IMR-90 (cell line): ENCODE measurements at regions of chr17 and their contacts with region 1.

Region 1: DNA sequence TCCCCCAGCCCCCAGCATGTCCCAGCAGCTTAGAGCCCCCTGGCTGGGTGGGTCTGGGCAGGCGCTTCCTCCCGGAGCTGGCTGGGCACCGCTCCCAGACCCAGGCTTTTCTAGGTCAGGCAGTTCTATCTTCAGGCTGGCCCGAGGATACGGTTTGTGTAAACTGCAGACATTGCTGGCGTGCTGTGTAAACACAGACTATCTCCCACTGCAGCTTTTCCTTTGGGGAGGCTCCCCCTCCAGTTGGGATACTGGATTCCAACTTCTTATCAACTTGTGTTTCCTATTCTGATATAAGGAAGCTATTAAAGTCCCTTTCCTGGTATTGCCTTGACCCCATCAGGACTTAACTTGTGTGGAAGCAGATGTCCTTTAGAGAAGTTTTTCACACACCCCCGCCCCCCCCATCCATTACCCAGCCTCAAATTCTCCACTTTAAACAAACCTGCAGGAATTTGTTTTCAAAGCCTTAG is 18.3 kb upstream of the GNA13 start:
- DNase-seq: peak; percentile 68
- ATAC-seq: peak; percentile 91
- H3K4me3 ChIP-seq: no peak overlapping the region
- H3K27ac ChIP-seq: peak overlapping the region; percentile 48; the same call in 1 of the 2 replicates
- H3K4me1 ChIP-seq: peaks cover 14% of the 10 kb centered on the region
- H3K27me3 ChIP-seq: no peaks in the 10 kb centered on the region
- CTCF ChIP-seq: no peak
- POLR2A ChIP-seq: no peak
- RAD21 ChIP-seq: peak; percentile 18; the same call in 1 of the 2 replicates

Region 2: DNA sequence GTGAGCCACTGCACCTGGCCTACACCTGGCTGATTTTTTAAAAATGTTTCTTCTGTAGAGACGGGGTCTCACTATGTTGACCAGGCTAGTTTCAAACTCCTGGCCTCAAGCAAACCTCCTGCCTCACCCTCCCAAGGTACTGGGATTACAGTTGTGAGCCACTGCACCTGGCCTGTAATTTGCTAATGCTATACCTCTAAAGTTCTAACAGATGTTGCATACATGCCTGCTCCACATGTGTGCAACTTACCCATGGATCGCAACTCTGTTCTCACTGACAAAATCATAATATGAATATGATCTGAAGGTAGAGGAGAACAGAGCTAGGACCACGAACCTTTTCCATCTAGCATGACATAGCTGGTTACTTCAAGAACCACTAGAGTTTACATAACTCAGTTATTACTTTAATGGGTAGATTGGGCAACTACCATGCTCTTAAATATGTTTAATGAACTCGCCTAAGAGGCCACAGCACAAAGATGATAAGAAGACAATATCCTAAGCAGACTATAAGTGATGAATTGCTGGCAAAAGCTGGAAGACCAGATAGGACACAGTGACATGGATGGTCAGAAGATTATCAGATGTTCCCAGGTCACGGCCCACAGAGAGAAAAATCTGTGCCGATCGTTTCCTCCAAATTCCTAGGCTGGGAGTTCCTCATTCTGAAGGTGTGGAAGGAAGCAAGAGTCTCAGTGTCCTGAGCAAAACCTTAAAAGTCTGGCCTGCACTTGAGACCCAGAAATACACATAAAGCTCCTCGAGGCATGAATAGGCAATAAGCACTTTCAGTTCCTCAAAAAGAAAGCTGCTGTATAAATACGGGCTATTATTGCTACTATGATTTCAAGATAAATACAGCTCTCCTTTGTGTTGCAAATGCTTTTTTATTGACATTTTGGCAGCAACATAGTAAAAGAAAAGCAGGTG is 1000.8 kb before region 1 on chr17:
- CTCF ChIA-PET with region 1: no interaction called
- POLR2A ChIA-PET with region 1: no interaction called
- dilution Hi-C with region 1: no loop called
- in situ Hi-C with region 1: no loop called
- intact Hi-C with region 1: no loop called
- DNase-seq: no peak
- ATAC-seq: no peak; the same call in 1 of the 2 replicates
- H3K4me3 ChIP-seq: no peak overlapping the region
- H3K27ac ChIP-seq: no peak overlapping the region
- H3K4me1 ChIP-seq: peaks cover 11% of the 10 kb centered on the region
- H3K27me3 ChIP-seq: no peaks in the 10 kb centered on the region
- CTCF ChIP-seq: no peak
- POLR2A ChIP-seq: no peak
- RAD21 ChIP-seq: no peak

Region 3: GRCh38 chr17:64682261-64683181 is 392.3 kb before region 1 on chr17:
- CTCF ChIA-PET with region 1: no interaction called
- POLR2A ChIA-PET with region 1: no interaction called
- dilution Hi-C with region 1: no loop called
- in situ Hi-C with region 1: no loop called
- intact Hi-C with region 1: no loop called
- DNase-seq: peak; percentile 95
- ATAC-seq: peak; percentile 40
- H3K4me3 ChIP-seq: peak overlapping the region; percentile 26; the same call in 1 of the 2 replicates
- H3K27ac ChIP-seq: peak overlapping the region; percentile 99
- H3K4me1 ChIP-seq: peaks cover 29% of the 10 kb centered on the region
- H3K27me3 ChIP-seq: no peaks in the 10 kb centered on the region
- CTCF ChIP-seq: peak; percentile 24; the same call in 1 of the 2 replicates
- POLR2A ChIP-seq: no peak; the same call in 1 of the 2 replicates
- RAD21 ChIP-seq: peak; percentile 19; the same call in 1 of the 2 replicates

Region 4: DNA sequence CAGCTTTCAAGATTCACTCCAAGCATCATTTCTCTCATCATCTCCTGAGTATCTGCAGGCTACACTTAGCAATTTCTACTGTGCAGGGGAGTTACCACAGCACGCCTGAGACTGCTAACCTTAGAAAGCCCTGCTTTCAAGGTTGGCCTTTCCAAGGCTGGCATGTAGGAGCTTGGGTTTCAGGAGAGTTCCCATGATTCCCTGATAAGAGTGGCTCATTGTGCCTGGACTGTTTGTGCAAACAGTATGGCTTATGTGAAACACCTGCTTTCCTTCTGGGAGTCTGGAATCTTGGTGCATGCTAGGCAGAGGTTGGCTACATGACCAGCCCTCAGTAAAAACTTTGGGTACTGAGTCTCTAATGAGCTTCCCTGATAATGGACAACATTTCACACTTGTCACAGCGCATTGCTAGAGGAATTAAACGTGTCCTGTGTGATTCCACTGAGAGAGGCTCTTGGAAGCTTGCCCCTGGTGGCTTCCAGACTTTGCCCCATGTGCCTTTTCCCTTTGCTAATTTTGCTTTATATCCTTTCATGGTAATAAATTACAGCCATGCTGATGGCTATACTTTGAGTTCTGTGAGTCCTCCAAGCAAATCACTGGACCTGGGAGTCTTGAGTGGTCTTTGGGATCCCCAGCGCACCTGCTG is 42.7 kb after region 1 on chr17:
- CTCF ChIA-PET with region 1: no interaction called
- POLR2A ChIA-PET with region 1: interaction called, 13 read pairs
- dilution Hi-C with region 1: no loop called
- in situ Hi-C with region 1: no loop called
- intact Hi-C with region 1: no loop called
- DNase-seq: no peak
- ATAC-seq: no peak
- H3K4me3 ChIP-seq: no peak overlapping the region
- H3K27ac ChIP-seq: no peak overlapping the region
- H3K4me1 ChIP-seq: no peaks in the 10 kb centered on the region
- H3K27me3 ChIP-seq: peaks cover 13% of the 10 kb centered on the region
- CTCF ChIP-seq: no peak
- POLR2A ChIP-seq: no peak
- RAD21 ChIP-seq: no peak

Region 5: GRCh38 chr17:65261682-65262636 is 187.1 kb after region 1 on chr17:
- CTCF ChIA-PET with region 1: no interaction called
- POLR2A ChIA-PET with region 1: no interaction called
- dilution Hi-C with region 1: no loop called
- in situ Hi-C with region 1: no loop called
- intact Hi-C with region 1: no loop called
- DNase-seq: peak; percentile 46
- ATAC-seq: no peak
- H3K4me3 ChIP-seq: no peak overlapping the region
- H3K27ac ChIP-seq: no peak overlapping the region
- H3K4me1 ChIP-seq: no peaks in the 10 kb centered on the region
- H3K27me3 ChIP-seq: peaks cover 12% of the 10 kb centered on the region
- CTCF ChIP-seq: no peak
- POLR2A ChIP-seq: no peak
- RAD21 ChIP-seq: no peak